ENCODE measurements at regions of chr14 and their contacts with region 1.

Region 1: GRCh38 chr14:22653012-22653621 is 9.0 kb upstream of the OR6J1 start:
- DNase-seq: peak; percentile 80
- H3K4me3 Mint-ChIP-seq: no peak overlapping the region
- H3K27ac Mint-ChIP-seq: no peak overlapping the region
- H3K4me1 Mint-ChIP-seq: peaks cover 27% of the 10 kb centered on the region
- H3K27me3 Mint-ChIP-seq: no peaks in the 10 kb centered on the region
- CTCF ChIP-seq: peak; percentile 67

Region 2: DNA sequence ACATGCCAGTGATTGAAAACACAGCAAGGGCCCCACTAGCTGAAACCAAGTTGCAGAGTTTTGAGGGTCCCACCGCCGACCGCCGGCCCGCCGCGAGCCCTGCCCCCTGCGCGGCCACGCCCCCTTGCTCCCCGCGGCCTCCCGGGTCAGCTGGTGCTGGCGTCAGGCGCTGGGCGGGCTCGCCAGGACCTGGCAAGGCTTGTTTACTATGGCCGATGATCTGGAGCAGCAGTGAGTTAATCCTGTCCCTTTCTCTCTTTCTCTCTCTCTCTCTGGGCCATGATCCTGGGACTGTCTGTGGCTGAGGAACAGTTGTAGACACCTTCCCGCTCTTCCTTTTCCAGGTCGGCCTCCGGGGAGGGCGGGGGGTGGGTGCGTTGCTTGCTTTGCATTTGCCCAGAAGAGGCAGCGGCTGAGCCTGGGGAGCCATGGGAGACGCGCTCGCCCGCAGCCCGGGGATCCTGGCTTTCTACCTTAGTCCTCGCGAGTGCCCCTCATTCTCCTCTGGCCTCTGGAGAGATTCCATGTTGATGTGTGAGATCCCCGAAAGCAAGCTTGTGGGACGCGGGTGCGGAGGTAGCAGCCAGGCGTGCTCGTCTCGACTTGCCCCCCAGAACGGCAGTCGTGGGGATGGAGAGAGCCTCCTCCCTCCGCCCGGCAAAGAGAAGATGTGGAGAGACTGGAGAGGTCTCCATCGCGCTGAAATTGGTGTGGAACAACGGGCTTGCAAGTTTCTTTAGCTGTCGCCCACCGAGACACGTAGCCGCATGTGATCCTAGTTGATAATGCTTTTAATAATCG is 54.8 kb before region 1 on chr14 and contains the start of gene ABHD4:
- CTCF ChIA-PET with region 1: interaction called, 16 read pairs
- intact Hi-C with region 1: no loop called
- DNase-seq: peak; percentile 74
- H3K4me3 Mint-ChIP-seq: peak within 1 kb of the TSS; percentile 86
- H3K27ac Mint-ChIP-seq: peak within 1 kb of the TSS; percentile 29
- H3K4me1 Mint-ChIP-seq: peaks cover 25% of the 10 kb centered on the region
- H3K27me3 Mint-ChIP-seq: peaks cover 6% of the 10 kb centered on the region
- CTCF ChIP-seq: no peak
- total RNA-seq, gene ABHD4: 11.2 and 11.6 TPM in 2 replicates

Region 3: DNA sequence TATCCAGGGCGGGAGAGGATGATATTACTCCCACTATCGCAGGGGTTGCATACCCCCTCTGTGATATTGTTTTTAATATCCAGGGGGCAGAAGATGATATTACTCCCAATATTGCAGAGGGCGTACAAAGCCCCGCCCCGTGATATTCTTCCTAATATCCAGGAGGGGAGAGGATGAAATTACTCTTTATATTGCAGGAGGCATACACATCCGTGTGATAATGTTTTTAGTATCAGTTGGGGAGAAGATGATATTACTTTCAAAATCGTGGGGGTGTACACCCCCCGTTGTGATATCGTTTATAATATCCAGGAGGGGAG is 60.5 kb after region 1 on chr14:
- CTCF ChIA-PET with region 1: interaction called, 10 read pairs
- intact Hi-C with region 1: no loop called
- DNase-seq: no peak
- H3K4me3 Mint-ChIP-seq: peak overlapping the region; percentile 74
- H3K27ac Mint-ChIP-seq: peak overlapping the region; percentile 58
- H3K4me1 Mint-ChIP-seq: no peaks in the 10 kb centered on the region
- H3K27me3 Mint-ChIP-seq: peaks cover 33% of the 10 kb centered on the region
- CTCF ChIP-seq: no peak

Region 4: DNA sequence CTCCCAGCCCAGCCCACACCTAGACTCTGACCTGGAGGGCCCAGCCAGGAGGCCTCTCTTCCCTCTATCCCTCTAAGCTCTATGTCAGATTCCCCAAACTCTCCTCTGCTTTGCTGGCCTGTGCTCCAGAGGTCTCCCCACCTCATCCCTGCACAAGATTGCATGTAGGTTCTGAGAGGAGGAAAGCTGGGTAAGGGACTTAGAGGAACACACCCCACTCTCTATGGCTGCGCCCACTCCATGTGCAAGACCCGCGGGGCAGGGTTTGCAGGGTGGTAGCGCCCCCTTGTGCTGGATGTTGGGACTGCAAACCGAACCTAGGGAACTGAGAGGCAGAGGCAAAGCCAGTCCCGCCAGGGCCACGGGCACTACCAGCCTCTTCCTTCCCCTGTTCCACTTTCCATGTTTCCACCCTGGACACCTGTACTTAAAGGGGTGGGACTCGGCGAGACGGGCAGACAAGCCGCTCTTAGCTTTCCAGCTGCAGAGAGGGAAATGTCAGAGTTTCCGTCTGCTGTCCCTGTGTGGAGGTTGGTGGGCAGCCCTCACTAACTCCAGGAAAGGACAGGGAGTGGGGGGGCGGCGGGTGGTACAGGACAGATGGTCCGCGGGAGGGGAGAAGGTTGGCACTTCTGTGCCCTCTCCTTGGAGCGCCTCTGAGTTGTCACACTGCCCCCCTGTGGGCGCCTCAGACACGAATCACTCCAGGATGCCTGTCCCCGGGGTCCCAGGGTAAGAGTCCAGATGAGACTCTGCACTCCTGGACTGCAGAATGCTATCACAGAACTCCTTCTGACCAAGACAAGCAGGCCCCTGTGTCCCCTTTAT is 200.0 kb after region 1 on chr14:
- CTCF ChIA-PET with region 1: interaction called, 6 read pairs
- intact Hi-C with region 1: loop called (anchors 5 kb)
- DNase-seq: peak; percentile 91
- H3K4me3 Mint-ChIP-seq: peak overlapping the region; percentile 52
- H3K27ac Mint-ChIP-seq: peak overlapping the region; percentile 51
- H3K4me1 Mint-ChIP-seq: no peaks in the 10 kb centered on the region
- H3K27me3 Mint-ChIP-seq: no peaks in the 10 kb centered on the region
- CTCF ChIP-seq: peak; percentile 77

Measured in Calu3 (cell line).